ENCODE measurements at regions of chr11 and their contacts with region 1.

Region 1: DNA sequence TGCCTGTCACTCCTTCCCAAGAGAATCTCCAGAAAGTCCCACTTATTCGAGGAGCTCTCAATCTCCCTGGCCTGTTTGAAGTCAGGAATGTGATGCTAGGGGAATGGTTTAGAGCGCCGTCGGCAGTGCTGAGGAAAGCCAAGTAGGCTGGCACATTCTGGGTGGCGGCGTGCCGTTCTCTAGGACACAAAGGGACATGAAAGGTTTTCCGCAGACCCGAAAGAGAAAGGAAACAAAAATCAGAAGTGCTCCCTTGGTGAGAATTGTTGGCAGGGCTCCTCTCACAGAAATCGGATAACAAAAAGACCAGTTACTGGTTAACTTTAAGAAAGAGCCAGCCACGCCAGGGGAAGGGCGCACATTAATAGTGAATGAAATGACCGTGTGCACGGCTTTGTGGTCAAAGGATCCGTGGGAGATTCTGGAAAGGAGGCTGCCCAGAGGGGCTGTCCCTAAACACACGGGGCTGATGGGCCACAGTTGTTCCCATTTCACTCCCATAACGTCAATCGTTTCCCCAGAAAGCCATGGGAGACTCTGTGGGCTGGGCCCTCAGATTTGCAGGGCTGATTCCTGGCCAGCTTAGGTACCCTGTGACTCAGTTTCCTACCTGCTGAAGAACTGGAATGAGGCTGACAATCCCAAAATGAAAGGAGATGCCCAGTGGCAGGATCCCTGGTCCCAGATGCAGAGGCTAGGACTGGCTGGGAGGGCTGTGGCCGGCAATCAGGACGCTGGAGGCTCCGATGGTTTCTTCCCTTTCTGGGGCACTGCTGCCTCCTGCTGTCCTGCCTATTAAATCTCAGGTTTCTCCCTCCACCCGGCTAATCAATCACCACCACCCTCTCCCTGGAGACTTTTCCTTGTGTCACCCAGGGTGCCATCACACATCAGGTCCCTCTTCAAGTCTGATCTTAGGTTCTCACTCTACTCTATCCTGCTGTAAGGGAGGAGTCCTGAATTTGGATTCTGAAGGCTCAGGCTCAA is 82.3 kb downstream of the RCN1 start:
- DNase-seq: peak; percentile 65

Region 2: GRCh38 chr11:32052218-32052617 is 120.9 kb before region 1 on chr11:
- in situ Hi-C with region 1: loop called (anchors 25 kb)
- DNase-seq: peak; percentile 51

Region 3: GRCh38 chr11:32290783-32291182 is 117.6 kb after region 1 on chr11:
- in situ Hi-C with region 1: no loop called
- DNase-seq: no peak

Measured in ACHN (cell line).